PC-9 (cell line): ENCODE measurements at regions of chr12 and their contacts with region 1.

Region 1: GRCh38 chr12:49967042-49967776 is 5.5 kb downstream of the AQP5 start:
- DNase-seq: peak; percentile 77 to 83
- H3K4me3 ChIP-seq: peak overlapping the region; percentile 50
- H3K27ac ChIP-seq: no peak overlapping the region
- H3K4me1 ChIP-seq: peaks cover 33% of the 10 kb centered on the region
- H3K27me3 ChIP-seq: peaks cover 23% of the 10 kb centered on the region
- CTCF ChIP-seq: peak; percentile 87

Region 2: GRCh38 chr12:49322708-49323523 is 644.3 kb before region 1 on chr12 and contains the start of gene TROAP:
- CTCF ChIA-PET with region 1: no interaction called
- POLR2A ChIA-PET with region 1: interaction called, 10 read pairs
- intact Hi-C with region 1: no loop called
- DNase-seq: peak; percentile 93 to 98
- H3K4me3 ChIP-seq: peak within 1 kb of the TSS; percentile 68
- H3K27ac ChIP-seq: 0 out of 2 replicates have a peak within 1 kb of the TSS, but pooled peaks have one; percentile 6
- H3K4me1 ChIP-seq: peaks cover 9% of the 10 kb centered on the region; the same call in 1 of the 2 replicates
- H3K27me3 ChIP-seq: no peaks in the 10 kb centered on the region
- CTCF ChIP-seq: no peak
- total RNA-seq, gene TROAP: 79.4 and 79.9 TPM in 2 replicates

Region 3: GRCh38 chr12:49698619-49699545 is 268.3 kb before region 1 on chr12:
- CTCF ChIA-PET with region 1: no interaction called
- POLR2A ChIA-PET with region 1: no interaction called
- intact Hi-C with region 1: no loop called
- DNase-seq: peak in 1 of 2 experiments; percentile 12
- H3K4me3 ChIP-seq: no peak overlapping the region
- H3K27ac ChIP-seq: no peak overlapping the region
- H3K4me1 ChIP-seq: 0 out of 2 replicates have a peak, but pooled peaks cover 8% of the 10 kb centered on the region
- H3K27me3 ChIP-seq: no peaks in the 10 kb centered on the region
- CTCF ChIP-seq: no peak

Region 4: GRCh38 chr12:49776413-49776812 is 190.8 kb before region 1 on chr12:
- CTCF ChIA-PET with region 1: no interaction called
- POLR2A ChIA-PET with region 1: no interaction called
- intact Hi-C with region 1: loop called (anchors 5 kb)
- DNase-seq: peak; percentile 51 to 54
- H3K4me3 ChIP-seq: no peak overlapping the region
- H3K27ac ChIP-seq: no peak overlapping the region
- H3K4me1 ChIP-seq: no peaks in the 10 kb centered on the region
- H3K27me3 ChIP-seq: no peaks in the 10 kb centered on the region
- CTCF ChIP-seq: peak; percentile 88

Region 5: DNA sequence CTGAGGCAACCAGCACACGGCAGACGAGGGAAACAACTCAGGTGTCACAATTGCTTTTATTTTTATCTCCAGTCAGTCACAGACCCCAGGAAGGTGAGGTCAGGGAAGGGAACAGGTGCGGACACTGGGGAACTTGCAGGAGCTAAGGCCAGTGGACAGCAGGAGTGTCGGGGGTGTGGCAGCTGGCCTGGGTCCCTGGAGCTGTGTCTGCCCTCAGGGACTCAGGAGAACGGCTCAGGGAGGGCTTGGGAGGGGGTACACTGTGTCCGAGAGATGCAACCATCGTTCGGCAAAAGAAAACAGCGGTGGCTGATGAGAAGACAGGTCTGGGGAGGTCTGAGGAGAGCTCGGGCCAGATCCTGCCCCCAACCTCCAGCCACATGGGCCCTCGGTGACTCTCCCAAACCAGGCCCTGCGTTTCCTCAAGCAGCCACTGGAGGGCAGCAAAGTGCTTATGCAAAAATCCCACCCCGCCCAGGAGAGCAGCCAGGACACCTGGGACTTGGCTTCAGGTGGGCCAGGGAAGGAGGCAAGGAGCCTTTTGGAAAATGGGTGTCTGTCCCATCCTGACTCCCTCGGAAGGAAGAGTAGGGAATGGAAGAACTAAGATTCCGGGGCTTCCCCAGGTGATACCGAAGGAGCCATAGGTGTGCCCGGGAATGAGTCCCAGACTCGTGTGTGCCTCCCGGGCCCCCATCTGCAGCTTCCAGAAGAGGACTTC is 100.2 kb before region 1 on chr12:
- CTCF ChIA-PET with region 1: interaction called, 20 read pairs
- POLR2A ChIA-PET with region 1: no interaction called
- intact Hi-C with region 1: loop called (anchors 1 kb)
- DNase-seq: peak; percentile 67 to 82
- H3K4me3 ChIP-seq: no peak overlapping the region
- H3K27ac ChIP-seq: peak overlapping the region; percentile 57; the same call in 1 of the 2 replicates
- H3K4me1 ChIP-seq: peaks cover 30% of the 10 kb centered on the region
- H3K27me3 ChIP-seq: no peaks in the 10 kb centered on the region
- CTCF ChIP-seq: peak; percentile 98

Region 6: GRCh38 chr12:49987625-49988303 is 20.6 kb after region 1 on chr12:
- CTCF ChIA-PET with region 1: no interaction called
- POLR2A ChIA-PET with region 1: no interaction called
- intact Hi-C with region 1: no loop called
- DNase-seq: no peak
- H3K4me3 ChIP-seq: no peak overlapping the region
- H3K27ac ChIP-seq: no peak overlapping the region
- H3K4me1 ChIP-seq: no peaks in the 10 kb centered on the region
- H3K27me3 ChIP-seq: no peaks in the 10 kb centered on the region
- CTCF ChIP-seq: no peak

Region 7: GRCh38 chr12:50025187-50026059 is 58.2 kb after region 1 on chr12 and contains the start of gene RACGAP1:
- CTCF ChIA-PET with region 1: no interaction called
- POLR2A ChIA-PET with region 1: no interaction called
- intact Hi-C with region 1: no loop called
- DNase-seq: peak; percentile 94 to 95
- H3K4me3 ChIP-seq: peak within 1 kb of the TSS; percentile 76
- H3K27ac ChIP-seq: no peak within 1 kb of the TSS
- H3K4me1 ChIP-seq: peaks cover 8% of the 10 kb centered on the region
- H3K27me3 ChIP-seq: no peaks in the 10 kb centered on the region
- CTCF ChIP-seq: no peak
- total RNA-seq, gene RACGAP1: 108 and 112 TPM in 2 replicates

Region 8: GRCh38 chr12:50066433-50066832 is 99.2 kb after region 1 on chr12:
- CTCF ChIA-PET with region 1: interaction called, 11 read pairs
- POLR2A ChIA-PET with region 1: interaction called, 5 read pairs
- intact Hi-C with region 1: loop called (anchors 2 kb)
- DNase-seq: peak; percentile 52 to 70
- H3K4me3 ChIP-seq: no peak overlapping the region
- H3K27ac ChIP-seq: no peak overlapping the region
- H3K4me1 ChIP-seq: peaks cover 6% of the 10 kb centered on the region; the same call in 1 of the 2 replicates
- H3K27me3 ChIP-seq: no peaks in the 10 kb centered on the region
- CTCF ChIP-seq: no peak

Region 9: DNA sequence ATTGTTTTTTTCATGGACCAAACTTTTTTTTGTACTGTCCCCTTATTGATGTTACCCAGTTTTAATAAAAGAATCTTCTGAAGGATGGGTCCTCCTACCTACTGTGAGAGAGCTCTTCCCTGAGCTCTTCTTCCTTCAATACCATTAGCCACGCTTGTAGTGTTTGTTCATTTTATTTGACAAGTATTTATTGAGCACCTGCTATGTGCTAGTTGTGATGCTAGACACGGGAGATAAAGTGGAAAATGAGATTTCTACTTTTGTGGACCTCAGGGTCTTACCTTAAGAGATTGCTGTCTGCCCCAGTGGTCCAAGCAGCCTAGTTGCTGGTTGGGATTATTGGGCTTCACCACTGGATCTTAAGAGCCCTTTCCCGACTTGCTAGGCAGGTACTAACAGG is 133.4 kb after region 1 on chr12:
- CTCF ChIA-PET with region 1: no interaction called
- POLR2A ChIA-PET with region 1: interaction called, 22 read pairs
- intact Hi-C with region 1: no loop called
- DNase-seq: no peak
- H3K4me3 ChIP-seq: no peak overlapping the region
- H3K27ac ChIP-seq: no peak overlapping the region
- H3K4me1 ChIP-seq: no peaks in the 10 kb centered on the region
- H3K27me3 ChIP-seq: no peaks in the 10 kb centered on the region
- CTCF ChIP-seq: no peak

Region 10: GRCh38 chr12:50806176-50806575 is 839.0 kb after region 1 on chr12:
- CTCF ChIA-PET with region 1: no interaction called
- POLR2A ChIA-PET with region 1: no interaction called
- intact Hi-C with region 1: no loop called
- DNase-seq: no peak
- H3K4me3 ChIP-seq: no peak overlapping the region
- H3K27ac ChIP-seq: no peak overlapping the region
- H3K4me1 ChIP-seq: no peaks in the 10 kb centered on the region
- H3K27me3 ChIP-seq: no peaks in the 10 kb centered on the region
- CTCF ChIP-seq: no peak

Region 11: GRCh38 chr12:51293696-51294095 is 1326.5 kb after region 1 on chr12:
- CTCF ChIA-PET with region 1: interaction called, 17 read pairs
- POLR2A ChIA-PET with region 1: no interaction called
- intact Hi-C with region 1: no loop called
- DNase-seq: peak in 1 of 2 experiments; percentile 42
- H3K4me3 ChIP-seq: no peak overlapping the region
- H3K27ac ChIP-seq: no peak overlapping the region
- H3K4me1 ChIP-seq: peaks cover 23% of the 10 kb centered on the region
- H3K27me3 ChIP-seq: no peaks in the 10 kb centered on the region
- CTCF ChIP-seq: no peak